Calu3 (cell line): ENCODE measurements at regions of chr1 and their contacts with region 1.

Region 1: DNA sequence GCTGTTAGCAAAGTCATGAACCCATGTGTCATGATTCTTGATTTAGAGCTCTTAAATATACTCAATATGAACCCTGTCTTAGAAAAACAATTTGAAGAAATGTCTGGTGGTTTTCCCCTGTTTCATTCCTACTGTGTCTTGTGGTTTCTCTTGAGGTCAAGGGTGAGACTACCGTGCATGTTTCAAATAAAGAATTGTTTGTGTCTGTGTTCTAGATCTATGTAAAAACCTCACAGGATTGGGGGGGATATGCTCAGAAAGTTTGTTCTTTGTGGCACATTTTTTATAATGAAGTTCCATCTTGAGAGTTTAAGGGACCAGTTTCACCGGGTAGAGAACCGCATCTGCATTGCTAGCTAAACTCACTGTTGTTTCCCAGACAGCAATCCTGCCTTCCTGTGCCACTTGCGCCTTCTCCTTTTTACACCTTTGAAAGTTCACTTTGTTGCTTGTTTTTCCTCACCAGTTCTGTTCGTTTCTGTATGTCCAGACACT is 30.9 kb upstream of the CACYBP start:
- DNase-seq: peak; percentile 57
- H3K4me3 Mint-ChIP-seq: peak overlapping the region; percentile 1
- H3K27ac Mint-ChIP-seq: peak overlapping the region; percentile 81
- H3K4me1 Mint-ChIP-seq: peaks cover 76% of the 10 kb centered on the region
- H3K27me3 Mint-ChIP-seq: no peaks in the 10 kb centered on the region
- CTCF ChIP-seq: no peak

Region 2: GRCh38 chr1:174892016-174892415 is 76.8 kb before region 1 on chr1:
- CTCF ChIA-PET with region 1: interaction called, 3 read pairs
- intact Hi-C with region 1: loop called (anchors 5 kb)
- DNase-seq: no peak
- H3K4me3 Mint-ChIP-seq: no peak overlapping the region
- H3K27ac Mint-ChIP-seq: no peak overlapping the region
- H3K4me1 Mint-ChIP-seq: peaks cover 32% of the 10 kb centered on the region
- H3K27me3 Mint-ChIP-seq: no peaks in the 10 kb centered on the region
- CTCF ChIP-seq: no peak